HepG2 (cell line): ENCODE measurements at regions of chr9 and their contacts with region 1.

Region 1: GRCh38 chr9:89602978-89603766 is 1.6 kb upstream of the GADD45G start:
- DNase-seq: peak; percentile 63
- ATAC-seq: peak; percentile 58
- H3K4me3 ChIP-seq: no peak overlapping the region
- H3K27ac ChIP-seq: no peak overlapping the region
- H3K4me1 ChIP-seq: peaks cover 38% of the 10 kb centered on the region
- H3K27me3 ChIP-seq: peaks cover 5 to 52% of the 10 kb centered on the region in 2 experiments
- CTCF ChIP-seq: peak; percentile 88
- EP300 ChIP-seq: no peak
- POLR2A ChIP-seq: no peak
- RAD21 ChIP-seq: peak; percentile 88

Region 2: GRCh38 chr9:89732295-89732938 is 129.2 kb after region 1 on chr9:
- CTCF ChIA-PET with region 1: no interaction called
- POLR2A ChIA-PET with region 1: no interaction called
- in situ Hi-C with region 1: loop called (anchors 10 kb)
- intact Hi-C with region 1: loop called (anchors 5 kb)
- DNase-seq: no peak
- ATAC-seq: no peak
- H3K4me3 ChIP-seq: no peak overlapping the region
- H3K27ac ChIP-seq: no peak overlapping the region
- H3K4me1 ChIP-seq: peaks cover 26% of the 10 kb centered on the region
- H3K27me3 ChIP-seq: no peaks in the 10 kb centered on the region; a peak in 1 of 5 replicates
- CTCF ChIP-seq: no peak
- EP300 ChIP-seq: no peak
- POLR2A ChIP-seq: no peak
- RAD21 ChIP-seq: no peak

Region 3: DNA sequence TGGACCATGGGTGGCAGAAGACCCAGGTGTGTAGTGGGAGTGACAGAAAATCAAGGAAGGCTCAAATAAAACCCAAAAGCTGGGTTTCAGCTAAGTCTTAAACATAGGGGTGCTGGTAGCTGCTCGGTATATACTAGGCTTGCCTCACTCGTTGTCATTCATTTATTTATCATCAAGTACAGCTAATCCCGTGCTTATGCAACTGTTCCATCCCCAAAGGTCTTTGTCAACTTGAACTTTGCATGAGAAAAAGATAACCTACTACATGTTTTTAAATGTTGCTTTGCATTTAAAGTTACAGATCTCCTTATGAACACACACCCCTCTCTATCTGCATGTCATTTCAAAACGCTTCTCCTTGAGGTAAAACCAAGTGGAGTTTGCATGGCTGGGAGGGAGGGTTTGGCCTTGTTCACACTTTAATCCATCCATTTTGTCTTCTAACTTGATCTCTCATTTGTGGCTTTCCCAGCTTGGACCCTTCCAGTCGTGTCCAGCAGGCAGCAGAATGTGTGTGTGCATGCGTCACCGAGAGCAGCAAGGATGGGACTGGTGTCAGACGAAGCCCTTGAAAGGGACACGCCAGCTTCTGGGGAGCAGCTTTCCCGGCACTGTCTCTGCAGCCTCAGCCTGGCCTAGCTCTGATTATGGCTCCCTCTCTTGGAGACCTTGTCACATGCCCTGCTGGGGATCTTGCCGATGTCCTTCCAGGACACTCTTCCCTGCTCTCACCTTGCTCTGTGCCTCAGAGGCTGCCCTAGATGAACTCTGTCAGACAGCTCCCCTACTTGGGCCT is 135.2 kb after region 1 on chr9:
- CTCF ChIA-PET with region 1: no interaction called
- POLR2A ChIA-PET with region 1: no interaction called
- in situ Hi-C with region 1: loop called (anchors 10 kb)
- intact Hi-C with region 1: loop called (anchors 5 kb)
- DNase-seq: no peak
- ATAC-seq: peak; percentile 67
- H3K4me3 ChIP-seq: no peak overlapping the region
- H3K27ac ChIP-seq: no peak overlapping the region
- H3K4me1 ChIP-seq: no peaks in the 10 kb centered on the region
- H3K27me3 ChIP-seq: peaks cover 0 to 4% of the 10 kb centered on the region in 2 experiments; a peak in 2 of 5 replicates
- CTCF ChIP-seq: peak; percentile 36
- EP300 ChIP-seq: no peak
- POLR2A ChIP-seq: no peak
- RAD21 ChIP-seq: no peak

Region 4: GRCh38 chr9:89919169-89919681 is 316.1 kb after region 1 on chr9:
- CTCF ChIA-PET with region 1: interaction called, 4 read pairs
- POLR2A ChIA-PET with region 1: no interaction called
- in situ Hi-C with region 1: loop called (anchors 5 kb)
- intact Hi-C with region 1: loop called (anchors 1 kb)
- DNase-seq: peak; percentile 6
- ATAC-seq: peak; percentile 77
- H3K4me3 ChIP-seq: no peak overlapping the region
- H3K27ac ChIP-seq: no peak overlapping the region
- H3K4me1 ChIP-seq: peaks cover 10% of the 10 kb centered on the region
- H3K27me3 ChIP-seq: no peaks in the 10 kb centered on the region; a peak in 1 of 5 replicates
- CTCF ChIP-seq: peak; percentile 49
- EP300 ChIP-seq: no peak
- POLR2A ChIP-seq: no peak
- RAD21 ChIP-seq: no peak

Region 5: DNA sequence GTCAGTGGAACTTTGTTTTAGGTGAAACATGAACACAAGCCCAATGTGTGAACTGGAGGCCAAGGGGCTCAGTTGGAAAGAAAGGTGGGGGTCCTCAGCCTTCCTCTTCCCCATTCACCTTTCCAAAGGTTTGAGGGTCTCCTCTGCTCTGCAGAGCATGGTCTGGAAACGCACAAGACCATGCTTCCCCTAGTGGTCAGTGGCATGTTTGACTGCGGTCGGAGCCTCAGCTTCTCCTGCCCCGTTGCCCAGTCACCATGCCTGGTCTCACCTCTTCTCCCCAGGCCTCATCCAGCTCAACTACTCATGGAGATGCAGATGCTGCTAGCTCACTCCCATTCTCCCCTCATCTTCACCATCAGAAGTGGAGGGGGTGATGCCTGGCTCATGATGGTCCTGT is 342.0 kb after region 1 on chr9:
- CTCF ChIA-PET with region 1: interaction called, 4 read pairs
- POLR2A ChIA-PET with region 1: no interaction called
- in situ Hi-C with region 1: no loop called
- intact Hi-C with region 1: loop called (anchors 1 kb)
- DNase-seq: no peak
- ATAC-seq: peak; percentile 74
- H3K4me3 ChIP-seq: no peak overlapping the region
- H3K27ac ChIP-seq: no peak overlapping the region
- H3K4me1 ChIP-seq: no peaks in the 10 kb centered on the region
- H3K27me3 ChIP-seq: peaks cover 0 to 11% of the 10 kb centered on the region in 2 experiments; a peak in 3 of 5 replicates
- CTCF ChIP-seq: peak; percentile 30; the same call in 1 of the 2 replicates
- EP300 ChIP-seq: no peak
- POLR2A ChIP-seq: no peak
- RAD21 ChIP-seq: no peak

Region 6: DNA sequence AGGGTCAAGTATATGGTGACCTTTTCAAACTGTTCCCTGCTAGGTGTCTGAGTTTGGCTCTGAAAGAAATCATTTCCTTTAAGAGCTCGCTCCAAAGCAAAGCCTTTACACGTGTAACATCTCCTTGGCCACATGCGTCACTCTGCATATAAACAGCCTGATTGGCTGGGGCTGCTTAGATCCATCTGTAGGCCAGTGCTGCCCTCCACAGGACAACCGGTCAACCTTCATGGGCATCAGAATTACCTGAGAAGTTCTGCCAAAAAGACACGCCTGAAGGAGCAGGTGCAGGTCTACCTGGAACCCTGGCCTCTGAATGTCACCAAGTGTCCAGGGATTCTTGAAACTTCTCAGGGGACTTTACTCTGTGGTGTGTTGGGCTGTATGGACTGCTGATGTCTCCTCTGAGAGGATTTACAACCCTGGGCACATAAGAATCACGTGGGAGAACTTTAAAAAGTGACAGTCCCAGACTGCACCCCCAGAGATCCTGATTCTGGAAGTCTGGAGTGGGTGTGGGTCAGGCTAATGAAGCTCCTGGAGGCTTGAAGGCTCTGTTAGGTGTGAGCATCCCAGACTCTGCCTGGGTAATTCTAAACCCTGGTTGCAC is 499.2 kb after region 1 on chr9:
- CTCF ChIA-PET with region 1: interaction called, 42 read pairs
- POLR2A ChIA-PET with region 1: no interaction called
- in situ Hi-C with region 1: loop called (anchors 5 kb)
- intact Hi-C with region 1: loop called (anchors 1 kb)
- DNase-seq: peak; percentile 71
- ATAC-seq: peak; percentile 98
- H3K4me3 ChIP-seq: no peak overlapping the region
- H3K27ac ChIP-seq: no peak overlapping the region
- H3K4me1 ChIP-seq: no peaks in the 10 kb centered on the region
- H3K27me3 ChIP-seq: no peaks in the 10 kb centered on the region
- CTCF ChIP-seq: peak; percentile 86
- EP300 ChIP-seq: no peak
- POLR2A ChIP-seq: no peak
- RAD21 ChIP-seq: peak; percentile 76